AG04449 (cell line): ENCODE measurements at regions of chr3 and their contacts with region 1.

Region 1: DNA sequence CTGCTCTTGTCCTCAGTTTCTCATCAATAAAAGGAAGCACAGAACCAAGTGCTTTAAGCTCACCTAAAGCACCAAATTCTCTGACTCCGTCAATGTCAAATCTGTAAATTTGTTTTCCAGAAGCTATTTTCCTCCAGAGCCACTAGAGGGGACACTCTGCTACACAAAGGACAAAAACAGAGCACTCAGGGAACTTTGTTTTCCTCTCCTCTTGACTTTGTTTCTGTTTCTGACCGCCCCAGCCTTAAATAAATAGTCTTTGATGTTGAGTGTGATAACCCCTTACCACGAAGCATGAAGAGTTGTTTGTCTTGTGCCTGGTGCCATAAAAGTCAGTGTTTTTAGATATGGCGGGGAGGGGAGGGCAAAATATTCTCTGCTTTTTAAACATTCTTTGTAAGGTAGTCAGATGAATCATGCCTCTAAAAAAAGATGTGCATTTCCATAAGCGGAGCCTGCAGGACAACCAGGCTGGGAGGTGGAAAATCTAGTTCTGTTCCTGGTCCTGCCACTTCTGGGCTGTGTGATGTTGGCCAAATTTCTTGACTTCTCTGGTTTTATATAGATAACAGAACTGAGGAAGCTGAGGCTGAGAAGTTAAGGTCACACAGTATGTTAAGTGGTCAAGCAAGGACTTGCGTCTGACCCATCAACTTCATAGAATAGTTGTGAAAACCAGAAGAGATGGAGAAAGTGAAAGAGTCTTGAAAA is 7.3 kb upstream of the ZBTB38 start:
- DNase-seq: peak; percentile 87
- H3K4me3 ChIP-seq: no peak overlapping the region; the same call in 1 of the 2 replicates
- CTCF ChIP-seq: peak; percentile 72

Region 2: GRCh38 chr3:141311496-141312353 is 49.3 kb before region 1 on chr3:
- CTCF ChIA-PET with region 1: interaction called, 32 read pairs
- POLR2A ChIA-PET with region 1: interaction called, 4 read pairs
- DNase-seq: peak; percentile 88
- H3K4me3 ChIP-seq: peak overlapping the region; percentile 96
- CTCF ChIP-seq: peak; percentile 89

Region 3: GRCh38 chr3:141346418-141346817 is 14.6 kb before region 1 on chr3:
- CTCF ChIA-PET with region 1: interaction called, 14 read pairs
- POLR2A ChIA-PET with region 1: no interaction called
- DNase-seq: no peak
- H3K4me3 ChIP-seq: no peak overlapping the region
- CTCF ChIP-seq: no peak

Region 4: GRCh38 chr3:141402476-141403171 is 41.6 kb after region 1 on chr3:
- CTCF ChIA-PET with region 1: interaction called, 12 read pairs
- POLR2A ChIA-PET with region 1: interaction called, 13 read pairs
- DNase-seq: no peak
- H3K4me3 ChIP-seq: peak overlapping the region; percentile 62
- CTCF ChIP-seq: no peak

Region 5: GRCh38 chr3:141465221-141465620 is 104.2 kb after region 1 on chr3:
- CTCF ChIA-PET with region 1: interaction called, 173 read pairs
- POLR2A ChIA-PET with region 1: no interaction called
- DNase-seq: no peak
- H3K4me3 ChIP-seq: no peak overlapping the region
- CTCF ChIP-seq: peak; percentile 10